B cell (primary cell): ENCODE measurements at regions of chr7 and their contacts with region 1.

Region 1: GRCh38 chr7:129224251-129225205 is at the start of gene AHCYL2:
- DNase-seq: peak; percentile 98
- ATAC-seq: peak; percentile 88
- H3K4me3 ChIP-seq: peak within 1 kb of the TSS; percentile 61 to 94 (median 81)
- H3K4me3 Mint-ChIP-seq: peak within 1 kb of the TSS; percentile 93
- H3K27ac ChIP-seq: peak within 1 kb of the TSS; percentile 90 to 94
- H3K27ac Mint-ChIP-seq: peak within 1 kb of the TSS; percentile 93
- H3K4me1 ChIP-seq: peaks cover 27% of the 10 kb centered on the region in 2 donors
- H3K4me1 Mint-ChIP-seq: peaks cover 35% of the 10 kb centered on the region
- H3K27me3 ChIP-seq: no peaks in the 10 kb centered on the region
- H3K27me3 Mint-ChIP-seq: no peaks in the 10 kb centered on the region
- CTCF ChIP-seq: no peak
- total RNA-seq, gene AHCYL2: 24.5 and 26.2 TPM in 2 replicates

Region 2: GRCh38 chr7:128530855-128531104 is 693.7 kb before region 1 on chr7:
- CTCF ChIA-PET with region 1: no interaction called
- POLR2A ChIA-PET with region 1: no interaction called
- intact Hi-C with region 1: loop called (anchors 5 kb)
- DNase-seq: no peak
- ATAC-seq: no peak
- H3K4me3 ChIP-seq: peak overlapping the region in 4 of 5 experiments; percentile 42 to 72 (median 68)
- H3K4me3 Mint-ChIP-seq: no peak overlapping the region
- H3K27ac ChIP-seq: peak overlapping the region; percentile 55 to 87
- H3K27ac Mint-ChIP-seq: no peak overlapping the region
- H3K4me1 ChIP-seq: peaks cover 13 to 18% of the 10 kb centered on the region in 2 donors
- H3K4me1 Mint-ChIP-seq: peaks cover 32% of the 10 kb centered on the region
- H3K27me3 ChIP-seq: no peaks in the 10 kb centered on the region
- H3K27me3 Mint-ChIP-seq: no peaks in the 10 kb centered on the region
- CTCF ChIP-seq: no peak

Region 3: DNA sequence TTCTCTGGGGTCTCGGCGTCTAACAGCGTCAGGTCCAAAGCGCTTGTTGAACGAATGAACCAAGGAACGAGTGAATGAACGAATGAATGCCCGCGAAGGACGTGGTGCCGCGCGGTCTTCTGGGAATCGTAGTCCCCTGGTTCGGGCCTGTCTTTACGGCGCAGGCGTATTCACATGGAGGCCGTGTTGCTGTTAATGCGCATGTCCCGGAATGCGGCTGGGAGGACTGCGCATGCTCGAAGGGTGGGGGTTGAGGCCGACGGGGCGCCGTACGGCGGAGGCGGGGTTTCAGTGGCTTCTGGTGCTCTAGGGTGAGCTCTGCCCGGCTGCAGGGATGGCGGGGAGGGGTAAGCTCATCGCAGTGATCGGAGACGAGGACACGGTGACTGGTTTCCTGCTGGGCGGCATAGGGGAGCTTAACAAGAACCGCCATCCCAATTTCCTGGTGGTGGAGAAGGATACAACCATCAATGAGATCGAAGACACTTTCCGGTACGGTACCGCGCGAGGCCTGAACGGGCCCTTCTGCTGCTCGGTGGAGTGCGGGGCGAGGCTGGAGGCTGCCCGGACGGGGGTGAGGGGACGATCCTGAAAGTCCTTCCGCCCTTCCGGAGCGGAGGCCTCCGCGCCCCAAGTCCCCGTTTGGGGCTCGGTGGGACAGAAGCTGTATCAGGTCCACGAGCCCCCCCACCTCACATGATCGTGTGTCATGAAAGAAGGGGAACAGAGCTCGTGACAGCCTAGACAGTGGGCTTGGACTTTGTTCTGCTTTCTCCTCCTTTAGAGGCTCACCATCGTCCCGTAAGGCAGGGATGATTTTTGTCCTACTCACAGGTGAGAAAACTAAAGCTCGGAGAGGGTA is 361.7 kb before region 1 on chr7 and contains the start of gene ATP6V1F:
- CTCF ChIA-PET with region 1: no interaction called
- POLR2A ChIA-PET with region 1: no interaction called
- intact Hi-C with region 1: loop called (anchors 1 kb)
- DNase-seq: peak; percentile 99
- ATAC-seq: peak; percentile 90
- H3K4me3 ChIP-seq: peak within 1 kb of the TSS; percentile 77 to 99 (median 97)
- H3K4me3 Mint-ChIP-seq: peak within 1 kb of the TSS; percentile 97
- H3K27ac ChIP-seq: peak within 1 kb of the TSS; percentile 95
- H3K27ac Mint-ChIP-seq: peak within 1 kb of the TSS; percentile 97
- H3K4me1 ChIP-seq: peaks cover 11 to 21% of the 10 kb centered on the region in 2 donors
- H3K4me1 Mint-ChIP-seq: peaks cover 44% of the 10 kb centered on the region
- H3K27me3 ChIP-seq: no peaks in the 10 kb centered on the region
- H3K27me3 Mint-ChIP-seq: no peaks in the 10 kb centered on the region
- CTCF ChIP-seq: no peak
- total RNA-seq, gene ATP6V1F: 77.9 and 81.7 TPM in 2 replicates

Region 4: DNA sequence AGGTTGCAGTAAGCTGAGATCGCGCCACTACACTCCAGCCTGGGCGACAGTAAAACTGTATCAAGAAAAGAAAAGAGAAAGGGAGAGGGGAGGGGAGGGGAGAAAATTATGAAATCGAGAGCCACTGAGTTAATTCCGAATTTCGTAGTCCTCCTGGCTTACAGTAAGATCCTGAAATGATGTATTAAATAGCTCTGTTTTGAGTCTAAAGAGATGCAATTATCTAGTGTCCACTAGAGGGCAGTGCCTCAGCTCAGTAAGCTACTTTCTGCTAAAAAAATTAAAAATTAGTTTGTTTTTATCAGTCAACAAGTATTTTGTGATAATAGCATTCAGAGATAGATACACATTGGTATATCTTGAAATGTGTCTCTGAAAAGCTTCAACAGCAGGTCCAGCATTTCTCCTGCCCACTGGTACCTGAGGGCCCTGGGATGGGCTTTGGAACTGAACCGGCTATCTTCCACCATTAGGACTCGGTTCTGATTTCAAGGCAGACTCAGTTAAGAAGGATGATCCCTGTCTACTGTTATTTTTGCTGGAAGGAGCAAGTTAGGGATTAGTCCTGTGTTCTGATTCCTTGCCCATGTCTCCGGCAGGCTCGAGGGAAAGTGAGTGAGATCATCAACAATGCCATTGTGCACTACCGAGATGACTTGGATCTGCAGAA is 60.5 kb before region 1 on chr7:
- CTCF ChIA-PET with region 1: interaction called, 10 read pairs
- POLR2A ChIA-PET with region 1: no interaction called
- intact Hi-C with region 1: no loop called
- DNase-seq: peak; percentile 72
- ATAC-seq: no peak
- H3K4me3 ChIP-seq: no peak overlapping the region
- H3K4me3 Mint-ChIP-seq: no peak overlapping the region
- H3K27ac ChIP-seq: no peak overlapping the region
- H3K27ac Mint-ChIP-seq: peak overlapping the region; percentile 17
- H3K4me1 ChIP-seq: peaks cover 52 to 54% of the 10 kb centered on the region in 2 donors
- H3K4me1 Mint-ChIP-seq: peaks cover 74% of the 10 kb centered on the region
- H3K27me3 ChIP-seq: no peaks in the 10 kb centered on the region
- H3K27me3 Mint-ChIP-seq: no peaks in the 10 kb centered on the region
- CTCF ChIP-seq: peak; percentile 92

Region 5: GRCh38 chr7:129367700-129368388 is 143.3 kb after region 1 on chr7:
- CTCF ChIA-PET with region 1: interaction called, 9 read pairs
- POLR2A ChIA-PET with region 1: no interaction called
- intact Hi-C with region 1: loop called (anchors 5 kb)
- DNase-seq: peak; percentile 79
- ATAC-seq: peak; percentile 85
- H3K4me3 ChIP-seq: peak overlapping the region in 3 of 5 experiments; percentile 15 to 32 (median 23)
- H3K4me3 Mint-ChIP-seq: peak overlapping the region; percentile 69
- H3K27ac ChIP-seq: peak overlapping the region in 1 of 2 donors; percentile 67
- H3K27ac Mint-ChIP-seq: peak overlapping the region; percentile 66
- H3K4me1 ChIP-seq: peaks cover 14 to 15% of the 10 kb centered on the region in 2 donors
- H3K4me1 Mint-ChIP-seq: peaks cover 21% of the 10 kb centered on the region
- H3K27me3 ChIP-seq: no peaks in the 10 kb centered on the region
- H3K27me3 Mint-ChIP-seq: no peaks in the 10 kb centered on the region
- CTCF ChIP-seq: peak; percentile 88

Region 6: DNA sequence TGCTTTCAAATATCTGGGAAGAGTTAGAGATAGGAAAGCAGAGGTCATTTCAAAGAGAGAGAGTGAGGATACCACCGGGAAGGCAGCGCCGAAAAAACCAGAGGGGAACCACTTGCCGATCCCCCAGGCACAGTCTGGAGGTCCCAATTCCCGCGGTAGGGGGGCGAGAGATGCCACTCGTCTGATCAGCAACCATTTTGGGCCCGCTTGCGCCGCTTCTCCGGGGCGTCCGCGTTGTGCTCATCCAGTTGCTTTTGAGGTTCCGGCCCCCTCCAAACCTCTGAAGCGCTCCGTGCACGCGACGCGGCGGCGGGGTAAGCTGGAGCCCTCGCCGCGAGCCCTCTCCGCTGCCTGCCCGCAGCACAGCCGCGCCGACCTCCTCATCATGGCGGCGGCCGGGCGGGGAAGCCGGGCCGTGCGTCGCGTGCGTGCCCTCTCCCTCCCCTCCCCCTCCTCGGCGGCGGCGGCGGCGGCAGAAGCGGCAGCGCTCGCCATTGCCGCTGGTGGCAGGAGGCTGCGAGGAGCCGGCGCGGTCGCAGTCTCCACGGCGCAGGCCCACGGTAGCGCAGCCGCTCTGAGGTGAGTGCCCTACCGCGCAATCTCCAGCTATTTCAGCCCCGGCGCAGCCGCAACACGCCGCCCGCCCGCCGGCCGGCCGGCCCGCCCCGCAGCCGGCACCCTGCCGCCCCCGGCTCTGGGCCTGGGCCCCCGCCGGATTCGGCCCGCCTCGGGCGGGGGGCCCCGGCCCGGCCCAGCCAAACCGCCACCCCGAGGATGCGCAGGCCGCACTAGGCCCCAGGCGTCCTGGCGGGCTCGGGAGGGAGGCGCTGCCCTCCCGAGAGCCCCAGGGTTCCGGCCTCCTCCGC is 387.0 kb after region 1 on chr7 and contains the start of gene NRF1:
- CTCF ChIA-PET with region 1: no interaction called
- POLR2A ChIA-PET with region 1: no interaction called
- intact Hi-C with region 1: loop called (anchors 1 kb)
- DNase-seq: peak; percentile 96
- ATAC-seq: peak; percentile 87
- H3K4me3 ChIP-seq: peak within 1 kb of the TSS; percentile 70 to 97 (median 84)
- H3K4me3 Mint-ChIP-seq: peak within 1 kb of the TSS; percentile 97
- H3K27ac ChIP-seq: peak within 1 kb of the TSS; percentile 91 to 93
- H3K27ac Mint-ChIP-seq: peak within 1 kb of the TSS; percentile 97
- H3K4me1 ChIP-seq: peaks cover 47 to 53% of the 10 kb centered on the region in 2 donors
- H3K4me1 Mint-ChIP-seq: peaks cover 67% of the 10 kb centered on the region
- H3K27me3 ChIP-seq: no peaks in the 10 kb centered on the region
- H3K27me3 Mint-ChIP-seq: no peaks in the 10 kb centered on the region
- CTCF ChIP-seq: no peak
- total RNA-seq, gene NRF1: 49.2 and 53.0 TPM in 2 replicates